Heart left ventricle (tissue), 16 donors: ENCODE measurements at regions of chr1 and their contacts with region 1.

Region 1: DNA sequence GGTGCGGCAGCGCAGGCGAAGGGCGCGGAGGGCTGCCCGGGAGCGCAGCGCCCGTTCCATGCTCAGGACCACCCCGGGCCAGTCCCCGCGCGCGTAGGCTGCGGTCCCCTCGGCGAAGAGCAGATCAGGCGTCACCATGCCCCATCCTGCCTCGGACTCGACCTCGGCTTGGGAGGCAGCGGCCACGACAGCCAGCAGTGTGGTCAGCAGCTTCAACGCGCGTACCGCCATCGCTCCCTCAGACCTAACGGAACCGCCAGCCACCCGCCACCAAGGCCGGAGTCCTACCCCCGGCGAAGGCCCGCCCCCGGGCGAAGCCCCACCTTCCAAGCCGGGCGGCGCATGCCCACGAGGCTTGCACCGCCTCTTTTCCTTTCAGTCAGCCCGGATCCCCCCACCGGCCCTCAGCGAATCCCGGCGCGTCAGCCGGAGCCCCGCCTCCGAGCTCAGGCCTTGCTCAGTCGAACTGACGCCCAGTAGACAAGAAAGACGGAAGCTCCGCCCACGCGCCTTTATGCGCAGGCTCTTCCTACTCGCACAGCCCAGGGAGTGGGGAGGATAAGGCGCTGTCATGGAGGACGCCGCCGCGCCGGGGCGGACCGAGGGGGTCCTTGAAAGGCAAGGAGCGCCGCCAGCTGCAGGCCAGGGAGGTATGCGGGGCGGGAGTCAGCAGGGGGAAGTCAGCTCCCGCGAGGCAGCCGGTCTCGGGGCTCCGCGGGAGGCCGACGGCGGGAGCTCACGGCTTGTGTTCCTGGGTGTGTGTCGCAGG is at the starts of genes C1orf50 and P3H1:
- DNase-seq: peak; percentile 100
- ATAC-seq: peak; percentile 96 to 99 (median 98)
- H3K4me3 ChIP-seq: peak within 1 kb of the TSS; percentile 82 to 98 (median 94)
- H3K27ac ChIP-seq: peak within 1 kb of the TSS; percentile 72 to 97 (median 92)
- H3K4me1 ChIP-seq: peaks cover 3 to 47% (median 30%) of the 10 kb centered on the region in 12 donors
- H3K27me3 ChIP-seq: no peaks in the 10 kb centered on the region
- CTCF ChIP-seq: peak in 1 of 12 donors; percentile 10
- POLR2A ChIP-seq: peak; percentile 98 to 99
- total RNA-seq, gene C1orf50: 3.0 to 9.2 (median 5.8) TPM
- total RNA-seq, gene P3H1: 6.9 to 27.9 (median 10.0) TPM

Region 2: DNA sequence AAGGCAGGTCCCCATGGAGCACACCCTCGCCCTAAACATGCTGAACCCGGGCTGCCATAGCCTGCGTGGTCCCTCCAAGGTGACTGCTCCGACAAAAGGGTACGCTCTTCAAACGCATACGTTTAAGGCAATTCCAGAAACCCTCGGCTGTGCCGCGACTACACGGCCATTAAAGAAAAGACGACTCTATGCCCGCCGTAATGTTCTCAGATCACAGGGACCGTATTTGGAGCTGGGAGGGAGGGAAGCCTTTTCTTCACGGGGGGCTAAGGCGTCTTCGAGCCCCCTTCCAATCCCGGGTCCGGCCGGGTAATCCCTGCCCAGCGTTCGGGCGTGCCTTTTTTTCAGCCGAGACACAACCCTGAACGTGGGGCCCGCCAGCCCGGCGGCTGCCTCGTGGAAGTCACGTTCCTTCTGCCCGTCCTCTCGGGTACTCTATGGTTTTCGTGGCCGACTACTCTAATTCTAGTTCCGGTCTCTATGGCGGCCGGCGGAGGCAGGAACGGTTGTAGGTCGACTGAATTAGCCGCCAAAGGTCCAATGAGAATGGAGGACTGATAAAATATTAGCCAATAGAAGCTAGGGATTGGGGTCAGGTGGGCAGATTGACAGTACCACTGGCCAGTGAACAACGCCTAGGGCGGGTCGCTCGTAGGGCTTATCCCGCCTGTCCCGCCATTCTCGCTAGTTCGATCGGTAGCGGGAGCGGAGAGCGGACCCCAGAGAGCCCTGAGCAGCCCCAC is 85.0 kb before region 1 on chr1 and contains the start of gene YBX1:
- intact Hi-C with region 1: loop called in 7 of 10 experiments (anchors 5 to 10 kb)
- DNase-seq: peak; percentile 96 to 97 (median 97)
- ATAC-seq: peak; percentile 97 to 99 (median 98)
- H3K4me3 ChIP-seq: peak within 1 kb of the TSS; percentile 64 to 99 (median 85)
- H3K27ac ChIP-seq: peak within 1 kb of the TSS; percentile 86 to 100 (median 96)
- H3K4me1 ChIP-seq: peaks cover 21 to 58% (median 44%) of the 10 kb centered on the region in 12 donors
- H3K27me3 ChIP-seq: no peaks in the 10 kb centered on the region
- CTCF ChIP-seq: no peak
- POLR2A ChIP-seq: peak in 1 of 2 donors; percentile 84
- total RNA-seq, gene YBX1: 663 to 1,139 (median 788) TPM

Region 3: GRCh38 chr1:42723501-42723900 is 43.4 kb before region 1 on chr1:
- intact Hi-C with region 1: no loop called
- DNase-seq: no peak
- ATAC-seq: no peak
- H3K4me3 ChIP-seq: no peak overlapping the region
- H3K27ac ChIP-seq: no peak overlapping the region
- H3K4me1 ChIP-seq: no peaks in the 10 kb centered on the region
- H3K27me3 ChIP-seq: no peaks in the 10 kb centered on the region
- CTCF ChIP-seq: no peak
- POLR2A ChIP-seq: no peak

Region 4: DNA sequence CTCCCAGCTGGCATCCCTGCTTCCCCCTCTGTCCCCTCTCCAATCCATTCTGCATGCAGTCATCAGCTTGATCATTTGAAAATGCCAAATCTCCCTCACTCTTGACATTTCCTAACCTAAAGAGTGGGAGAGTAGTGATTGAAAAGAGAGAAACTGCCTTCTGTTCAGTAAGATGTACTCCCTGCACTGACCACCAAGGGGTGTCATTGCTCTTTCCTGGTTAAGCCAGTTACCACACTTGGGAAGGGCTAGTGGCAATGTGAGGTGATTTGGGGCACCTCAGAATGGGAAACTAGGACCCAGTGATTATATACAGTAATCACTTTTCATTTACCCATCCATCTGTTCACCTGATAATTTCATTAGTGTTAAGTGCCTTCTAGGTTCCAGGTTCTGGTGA is 10.9 kb after region 1 on chr1:
- intact Hi-C with region 1: no loop called
- DNase-seq: no peak
- ATAC-seq: peak in 3 of 4 donors; percentile 53 to 71 (median 63)
- H3K4me3 ChIP-seq: no peak overlapping the region
- H3K27ac ChIP-seq: no peak overlapping the region
- H3K4me1 ChIP-seq: peaks cover 0 to 3% (median 0%) of the 10 kb centered on the region in 12 donors
- H3K27me3 ChIP-seq: no peaks in the 10 kb centered on the region
- CTCF ChIP-seq: peak; percentile 35 to 65 (median 56)
- POLR2A ChIP-seq: no peak

Region 5: GRCh38 chr1:42816585-42817434 is 49.9 kb after region 1 on chr1 and contains the starts of genes ERMAP and SVBP:
- intact Hi-C with region 1: loop called in 3 of 10 experiments (anchors 1 to 5 kb)
- DNase-seq: peak; percentile 93 to 98 (median 94)
- ATAC-seq: peak; percentile 90 to 99 (median 98)
- H3K4me3 ChIP-seq: peak within 1 kb of the TSS; percentile 44 to 92 (median 78)
- H3K27ac ChIP-seq: peak within 1 kb of the TSS; percentile 93 to 100 (median 98)
- H3K4me1 ChIP-seq: peaks cover 0 to 27% (median 17%) of the 10 kb centered on the region in 12 donors
- H3K27me3 ChIP-seq: no peaks in the 10 kb centered on the region
- CTCF ChIP-seq: peak in 2 of 12 donors; percentile 16 to 17
- POLR2A ChIP-seq: peak in 1 of 2 donors; percentile 49
- total RNA-seq, gene ERMAP: 2.2 to 8.2 (median 5.4) TPM
- total RNA-seq, gene SVBP: 11.5 to 22.8 (median 15.8) TPM

Region 6: DNA sequence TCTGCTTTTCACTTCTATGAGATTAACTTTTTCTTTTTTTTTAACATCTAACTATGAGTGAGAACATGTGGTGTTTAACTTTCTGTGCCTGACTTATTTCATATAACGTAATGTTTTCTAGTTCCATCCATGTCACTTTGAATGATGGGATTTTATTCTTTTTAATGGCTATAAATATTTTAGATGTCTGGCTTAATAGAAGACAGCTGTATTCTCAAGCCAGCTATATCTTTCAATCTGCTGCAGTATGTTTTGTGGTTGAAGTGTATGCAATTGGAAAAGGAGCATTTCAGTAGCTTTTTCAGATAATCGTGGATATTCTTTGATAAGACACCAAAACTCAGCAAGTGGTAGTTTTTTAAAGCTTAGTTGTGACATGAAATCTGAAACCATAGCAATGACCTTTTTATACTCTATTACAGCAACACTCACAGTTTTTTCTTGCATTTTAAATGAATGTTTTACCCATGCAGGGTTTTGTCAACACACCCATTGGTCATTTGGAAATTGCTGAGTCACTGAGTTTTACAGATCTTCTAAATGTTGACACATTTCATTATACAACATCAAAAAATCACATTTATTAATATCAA is 56.0 kb after region 1 on chr1:
- intact Hi-C with region 1: loop called in 2 of 10 experiments (anchors 5 kb)
- DNase-seq: no peak
- ATAC-seq: no peak
- H3K4me3 ChIP-seq: no peak overlapping the region
- H3K27ac ChIP-seq: no peak overlapping the region
- H3K4me1 ChIP-seq: peaks cover 0 to 19% (median 3%) of the 10 kb centered on the region in 12 donors
- H3K27me3 ChIP-seq: no peaks in the 10 kb centered on the region
- CTCF ChIP-seq: no peak
- POLR2A ChIP-seq: no peak

Region 7: GRCh38 chr1:42846257-42847110 is 79.6 kb after region 1 on chr1 and contains the start of gene ZNF691:
- intact Hi-C with region 1: loop called in 2 of 10 experiments (anchors 5 to 10 kb)
- DNase-seq: peak; percentile 93 to 97 (median 96)
- ATAC-seq: peak; percentile 98 to 99 (median 98)
- H3K4me3 ChIP-seq: peak within 1 kb of the TSS; percentile 69 to 99 (median 90)
- H3K27ac ChIP-seq: peak within 1 kb of the TSS; percentile 85 to 96 (median 89)
- H3K4me1 ChIP-seq: peaks cover 0 to 28% (median 16%) of the 10 kb centered on the region in 12 donors
- H3K27me3 ChIP-seq: no peaks in the 10 kb centered on the region
- CTCF ChIP-seq: peak; percentile 25 to 77 (median 43)
- POLR2A ChIP-seq: peak in 1 of 2 donors; percentile 75
- total RNA-seq, gene ZNF691: 4.9 to 11.6 (median 8.4) TPM

Region 8: DNA sequence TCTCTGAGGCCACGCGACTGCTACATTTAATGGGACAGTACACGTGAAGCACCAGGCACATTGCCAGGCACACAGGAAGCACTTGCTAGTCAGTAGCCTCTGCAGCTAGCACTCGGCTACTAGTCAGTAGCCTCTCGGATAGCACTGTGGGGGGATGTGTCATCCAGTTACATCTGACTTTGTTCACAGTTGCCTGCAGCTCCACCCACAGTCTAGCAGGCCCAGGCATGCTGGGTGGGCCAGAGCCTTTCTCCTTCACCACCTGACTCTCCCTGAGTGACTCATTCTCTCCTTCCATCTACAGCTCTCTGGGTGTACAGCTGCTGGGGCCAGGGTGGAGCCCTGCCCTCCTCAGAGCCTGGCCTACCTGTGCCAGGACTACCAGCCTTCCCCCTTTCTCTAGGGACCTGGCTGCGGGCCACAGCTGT is 815.3 kb after region 1 on chr1:
- intact Hi-C with region 1: no loop called
- DNase-seq: no peak
- ATAC-seq: peak in 3 of 4 donors; percentile 19 to 74 (median 72)
- H3K4me3 ChIP-seq: no peak overlapping the region
- H3K27ac ChIP-seq: no peak overlapping the region
- H3K4me1 ChIP-seq: no peaks in the 10 kb centered on the region
- H3K27me3 ChIP-seq: no peaks in the 10 kb centered on the region
- CTCF ChIP-seq: no peak
- POLR2A ChIP-seq: no peak